ENCODE measurements at regions of chr21 and their contacts with region 1.

Region 1: GRCh38 chr21:39349211-39350093 is 564 bp upstream of the HMGN1 start:
- DNase-seq: peak; percentile 99
- ATAC-seq: peak; percentile 86
- H3K4me3 Mint-ChIP-seq: peak overlapping the region; percentile 99
- H3K27ac Mint-ChIP-seq: peak overlapping the region; percentile 100
- H3K4me1 Mint-ChIP-seq: peaks cover 35% of the 10 kb centered on the region
- H3K27me3 Mint-ChIP-seq: peaks cover 8% of the 10 kb centered on the region

Region 2: DNA sequence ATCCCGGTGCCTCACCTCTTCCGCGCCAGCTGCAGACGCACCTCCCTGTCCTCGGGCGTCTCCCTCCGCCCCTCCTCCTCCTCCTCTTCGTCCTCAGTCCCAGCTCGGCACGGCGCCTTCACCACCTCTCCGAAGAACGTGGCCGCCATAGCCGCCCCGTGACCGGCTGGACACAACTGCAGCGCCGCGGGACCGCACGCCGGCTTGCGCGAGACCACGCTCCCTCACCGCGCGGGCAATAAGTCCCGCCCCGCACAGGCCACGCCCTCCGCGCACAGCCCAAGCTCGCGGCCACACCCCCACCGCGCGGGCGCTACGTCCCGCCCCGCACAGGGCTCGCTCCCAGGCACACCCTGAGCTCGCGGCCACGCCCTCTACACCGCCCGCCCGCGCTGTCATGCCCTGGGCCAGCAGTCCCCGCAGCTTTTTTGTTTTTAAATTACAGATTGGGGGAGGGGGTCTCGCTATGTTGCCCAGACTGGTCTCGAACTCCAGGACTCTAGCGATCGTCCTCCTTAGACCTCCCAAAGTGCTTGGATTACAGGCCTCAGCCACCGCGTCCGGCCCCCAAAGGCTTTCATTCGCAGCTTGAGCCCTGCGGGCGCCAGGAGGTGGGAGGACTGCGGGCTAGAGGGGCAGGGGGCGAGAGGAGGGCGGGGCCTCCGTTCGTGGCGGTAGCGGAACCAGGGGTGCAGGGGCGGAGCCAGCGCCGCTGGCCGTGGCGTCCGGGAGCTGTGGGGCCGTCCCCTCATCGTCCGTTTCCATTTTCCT is 166.0 kb before region 1 on chr21 and contains the start of gene PSMG1:
- POLR2A ChIA-PET with region 1: interaction called, 25 read pairs
- DNase-seq: peak; percentile 98
- ATAC-seq: peak; percentile 90
- H3K4me3 Mint-ChIP-seq: peak within 1 kb of the TSS; percentile 97
- H3K27ac Mint-ChIP-seq: peak within 1 kb of the TSS; percentile 97
- H3K4me1 Mint-ChIP-seq: peaks cover 30% of the 10 kb centered on the region
- H3K27me3 Mint-ChIP-seq: no peaks in the 10 kb centered on the region
- total RNA-seq, gene PSMG1: 40.7 to 42.3 TPM

Region 3: DNA sequence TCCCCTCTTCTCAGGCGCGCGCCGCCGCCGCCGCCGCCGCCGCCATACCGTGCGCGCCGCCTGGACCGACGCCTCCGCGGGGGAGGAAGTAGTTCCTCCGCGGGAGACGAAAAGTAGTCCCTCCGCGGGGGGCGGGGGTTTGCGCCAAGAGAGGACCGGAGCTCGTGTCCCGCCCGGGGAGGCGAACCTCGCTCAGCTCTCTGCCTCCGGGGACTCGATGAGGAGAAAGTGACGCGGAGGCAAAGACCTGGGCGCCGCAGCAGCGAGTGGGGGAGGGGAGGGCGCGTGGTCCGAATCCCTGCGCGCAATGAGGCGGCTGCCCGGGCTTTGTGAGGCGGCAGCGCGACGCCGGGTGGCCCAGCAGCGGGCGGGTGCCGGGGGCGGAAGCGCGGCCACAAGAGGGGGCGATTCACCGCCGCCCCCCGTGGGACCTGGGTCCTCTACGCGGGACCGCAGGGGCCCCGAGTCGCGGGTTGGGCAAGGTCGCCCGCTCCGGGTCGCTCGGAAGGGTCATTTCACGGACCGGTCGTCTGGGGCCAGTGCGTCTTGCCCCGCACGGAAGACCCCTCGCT is 35.8 kb before region 1 on chr21 and contains the start of gene BRWD1:
- POLR2A ChIA-PET with region 1: interaction called, 78 read pairs
- DNase-seq: peak; percentile 89
- ATAC-seq: peak; percentile 63
- H3K4me3 Mint-ChIP-seq: peak within 1 kb of the TSS; percentile 95
- H3K27ac Mint-ChIP-seq: peak within 1 kb of the TSS; percentile 94
- H3K4me1 Mint-ChIP-seq: peaks cover 21% of the 10 kb centered on the region
- H3K27me3 Mint-ChIP-seq: peaks cover 5% of the 10 kb centered on the region
- total RNA-seq, gene BRWD1: 53.5 to 62.9 TPM

Region 4: DNA sequence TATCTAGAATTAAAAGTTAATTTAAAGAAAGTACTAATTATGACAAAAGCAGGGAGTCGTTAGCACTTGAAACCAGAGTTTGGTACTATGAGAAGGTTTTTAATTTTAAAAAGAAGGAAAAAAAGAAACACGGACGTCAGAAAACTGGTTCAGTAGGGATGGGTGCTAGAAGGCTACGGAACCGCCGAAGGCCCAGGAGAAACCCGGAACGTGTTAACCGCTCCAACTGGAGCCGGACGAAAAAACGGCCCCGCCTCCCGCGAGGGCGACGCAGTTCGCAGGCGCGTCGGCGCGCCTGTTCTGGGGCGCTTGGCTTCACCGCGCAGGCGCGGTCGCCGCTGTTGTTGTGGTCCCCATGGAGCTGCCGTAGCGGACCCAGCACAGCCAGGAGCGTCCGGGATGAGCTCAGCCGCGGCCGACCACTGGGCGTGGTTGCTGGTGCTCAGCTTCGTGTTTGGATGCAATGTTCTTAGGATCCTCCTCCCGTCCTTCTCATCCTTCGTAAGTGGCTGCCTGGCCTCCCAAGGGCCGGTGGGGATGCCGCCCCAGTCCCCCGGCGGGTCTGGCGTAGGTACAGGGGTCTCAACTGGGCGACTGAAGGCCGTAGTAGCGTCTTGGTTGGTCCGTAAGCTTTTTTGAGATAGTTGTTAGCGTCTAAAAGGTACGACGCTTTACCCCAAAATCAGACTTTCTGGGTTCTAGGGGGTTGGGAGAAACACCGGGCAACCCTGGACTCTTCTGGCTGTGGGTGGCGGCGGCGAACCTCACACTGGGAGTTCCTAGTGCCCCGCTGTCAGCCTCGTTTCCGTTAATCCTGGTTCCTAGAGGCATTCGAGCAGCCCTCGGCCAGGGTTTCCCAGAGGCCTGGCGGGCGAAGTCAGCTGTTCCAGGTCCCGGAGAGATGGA is 30.8 kb after region 1 on chr21:
- POLR2A ChIA-PET with region 1: interaction called, 40 read pairs
- DNase-seq: peak; percentile 91
- ATAC-seq: peak; percentile 100
- H3K4me3 Mint-ChIP-seq: peak overlapping the region; percentile 96
- H3K27ac Mint-ChIP-seq: peak overlapping the region; percentile 90
- H3K4me1 Mint-ChIP-seq: peaks cover 18% of the 10 kb centered on the region
- H3K27me3 Mint-ChIP-seq: peaks cover 6% of the 10 kb centered on the region

Region 5: DNA sequence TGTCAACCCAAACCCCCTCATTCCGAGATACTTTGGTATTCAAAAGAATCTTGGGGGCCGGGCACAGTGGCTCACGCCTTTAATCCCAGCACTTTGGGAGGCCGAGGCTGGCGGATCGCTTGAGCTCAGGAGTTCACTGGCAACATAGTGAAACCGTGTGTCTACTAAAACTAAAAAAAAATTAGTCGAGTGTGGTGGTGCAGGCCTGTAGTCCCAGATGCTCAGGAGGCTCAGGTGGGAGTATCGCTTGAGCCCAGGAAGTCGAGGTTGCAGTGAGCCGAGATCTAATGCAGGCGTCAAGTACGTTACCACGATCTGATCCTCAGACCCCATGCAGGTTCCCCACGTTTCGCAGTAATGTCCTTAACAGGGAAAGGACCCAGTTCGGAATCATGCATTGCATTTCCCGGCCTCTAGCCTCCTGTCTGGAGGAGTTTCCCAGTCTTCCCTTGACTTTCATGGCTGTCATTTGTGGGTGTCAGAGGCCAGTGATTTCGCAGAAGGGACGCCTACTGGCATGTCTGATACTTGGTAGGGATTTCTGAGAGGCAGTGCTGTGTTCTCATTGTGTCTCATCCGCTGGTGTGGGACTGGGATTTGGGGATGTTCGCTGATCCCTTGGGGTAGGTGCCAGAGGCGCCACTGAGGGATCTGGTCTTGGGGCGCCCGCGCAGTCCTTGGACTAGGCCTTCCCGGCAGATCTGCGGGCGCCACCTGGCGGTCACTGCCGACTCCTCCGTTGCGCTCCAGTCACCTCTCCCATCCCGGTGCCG is 38.8 kb after region 1 on chr21:
- POLR2A ChIA-PET with region 1: interaction called, 20 read pairs
- DNase-seq: peak; percentile 94
- ATAC-seq: peak; percentile 76
- H3K4me3 Mint-ChIP-seq: peak overlapping the region; percentile 91
- H3K27ac Mint-ChIP-seq: peak overlapping the region; percentile 89
- H3K4me1 Mint-ChIP-seq: peaks cover 27% of the 10 kb centered on the region
- H3K27me3 Mint-ChIP-seq: no peaks in the 10 kb centered on the region

Measured in activated naive CD8-positive, alpha-beta T cell treated with anti-CD3 and anti-CD28 coated beads, Interleukin-2, amount 10 ng/mL, durations not matched to agents 7 days and 5 days (primary cell).